ENCODE measurements at regions of chr3 and their contacts with region 1.

Region 1: GRCh38 chr3:102536456-102536855 is 101.6 kb downstream of the ZPLD1 start:
- DNase-seq: peak in 3 of 4 donors; percentile 9 to 20 (median 12)
- ATAC-seq: peak; percentile 59
- H3K4me3 ChIP-seq: no peak overlapping the region
- H3K27ac ChIP-seq: no peak overlapping the region
- H3K4me1 ChIP-seq: no peaks in the 10 kb centered on the region
- H3K27me3 ChIP-seq: no peaks in the 10 kb centered on the region
- CTCF ChIP-seq: peak in 6 of 7 experiments; percentile 10 to 63 (median 55)
- POLR2A ChIP-seq: no peak

Region 2: GRCh38 chr3:101803173-101803782 is 733.2 kb before region 1 on chr3:
- intact Hi-C with region 1: loop called (anchors 10 kb)
- DNase-seq: peak; percentile 51 to 76 (median 68)
- ATAC-seq: peak; percentile 93
- H3K4me3 ChIP-seq: no peak overlapping the region
- H3K27ac ChIP-seq: no peak overlapping the region
- H3K4me1 ChIP-seq: no peaks in the 10 kb centered on the region
- H3K27me3 ChIP-seq: no peaks in the 10 kb centered on the region
- CTCF ChIP-seq: peak; percentile 59 to 84 (median 79)
- POLR2A ChIP-seq: no peak

Region 3: DNA sequence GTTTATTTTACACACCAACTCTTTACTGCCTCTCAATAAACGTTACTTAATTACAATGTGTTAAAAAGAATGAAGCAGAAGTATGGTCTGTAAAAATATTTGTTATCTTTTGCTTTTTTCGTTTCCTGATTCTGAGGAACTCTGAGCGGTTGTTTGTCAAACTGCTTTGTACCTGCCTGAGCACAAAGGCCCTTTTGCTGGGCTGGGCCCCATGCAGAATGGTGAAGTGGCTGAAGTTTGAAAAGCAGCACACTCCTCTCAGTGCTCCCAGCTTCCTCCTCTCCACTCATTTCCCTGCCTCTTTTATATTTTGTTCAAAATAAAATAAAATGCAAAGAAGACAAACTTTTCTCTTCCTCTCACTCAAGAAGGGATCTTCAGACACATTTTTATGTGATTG is 457.6 kb before region 1 on chr3:
- intact Hi-C with region 1: no loop called
- DNase-seq: no peak
- ATAC-seq: no peak
- H3K4me3 ChIP-seq: no peak overlapping the region
- H3K27ac ChIP-seq: peak overlapping the region in 1 of 4 donors; percentile 47
- H3K4me1 ChIP-seq: no peaks in the 10 kb centered on the region
- H3K27me3 ChIP-seq: no peaks in the 10 kb centered on the region
- CTCF ChIP-seq: no peak
- POLR2A ChIP-seq: no peak

Region 4: GRCh38 chr3:102233881-102234280 is 302.6 kb before region 1 on chr3:
- intact Hi-C with region 1: loop called (anchors 5 kb)
- DNase-seq: no peak
- ATAC-seq: no peak
- H3K4me3 ChIP-seq: no peak overlapping the region
- H3K27ac ChIP-seq: no peak overlapping the region
- H3K4me1 ChIP-seq: no peaks in the 10 kb centered on the region
- H3K27me3 ChIP-seq: no peaks in the 10 kb centered on the region
- CTCF ChIP-seq: no peak
- POLR2A ChIP-seq: no peak